Mammary epithelial cell (primary cell): ENCODE measurements at regions of chr20 and their contacts with region 1.

Region 1: GRCh38 chr20:43963872-43964791 is 49.5 kb downstream of the TOX2 start:
- DNase-seq: no peak
- H3K4me3 ChIP-seq: no peak overlapping the region
- H3K27ac ChIP-seq: no peak overlapping the region
- H3K4me1 ChIP-seq: peaks cover 3% of the 10 kb centered on the region
- H3K27me3 ChIP-seq: no peaks in the 10 kb centered on the region
- CTCF ChIP-seq: no peak

Region 2: GRCh38 chr20:44041001-44041400 is 76.9 kb after region 1 on chr20:
- CTCF ChIA-PET with region 1: no interaction called
- dilution Hi-C with region 1: loop called (anchors 5 kb)
- in situ Hi-C with region 1: no loop called
- intact Hi-C with region 1: no loop called
- DNase-seq: no peak
- H3K4me3 ChIP-seq: no peak overlapping the region
- H3K27ac ChIP-seq: no peak overlapping the region
- H3K4me1 ChIP-seq: no peaks in the 10 kb centered on the region
- H3K27me3 ChIP-seq: no peaks in the 10 kb centered on the region
- CTCF ChIP-seq: no peak